ENCODE measurements at regions of chr9 and their contacts with region 1.

Region 1: GRCh38 chr9:90964101-90965020 is 162.7 kb downstream of the SYK start:
- DNase-seq: no peak
- H3K4me3 ChIP-seq: peak overlapping the region; percentile 26 to 43 (median 36)
- H3K27ac ChIP-seq: peak overlapping the region in 3 of 4 donors; percentile 39 to 81 (median 67)
- H3K4me1 ChIP-seq: peaks cover 0 to 3% (median 0%) of the 10 kb centered on the region in 4 donors
- H3K27me3 ChIP-seq: no peaks in the 10 kb centered on the region
- CTCF ChIP-seq: peak in 1 of 4 experiments; percentile 11
- EP300 ChIP-seq: no peak
- POLR2A ChIP-seq: no peak

Region 2: GRCh38 chr9:90569511-90569910 is 394.9 kb before region 1 on chr9:
- intact Hi-C with region 1: no loop called
- DNase-seq: no peak
- H3K4me3 ChIP-seq: no peak overlapping the region
- H3K27ac ChIP-seq: no peak overlapping the region
- H3K4me1 ChIP-seq: no peaks in the 10 kb centered on the region
- H3K27me3 ChIP-seq: no peaks in the 10 kb centered on the region
- CTCF ChIP-seq: no peak
- EP300 ChIP-seq: no peak
- POLR2A ChIP-seq: no peak

Region 3: DNA sequence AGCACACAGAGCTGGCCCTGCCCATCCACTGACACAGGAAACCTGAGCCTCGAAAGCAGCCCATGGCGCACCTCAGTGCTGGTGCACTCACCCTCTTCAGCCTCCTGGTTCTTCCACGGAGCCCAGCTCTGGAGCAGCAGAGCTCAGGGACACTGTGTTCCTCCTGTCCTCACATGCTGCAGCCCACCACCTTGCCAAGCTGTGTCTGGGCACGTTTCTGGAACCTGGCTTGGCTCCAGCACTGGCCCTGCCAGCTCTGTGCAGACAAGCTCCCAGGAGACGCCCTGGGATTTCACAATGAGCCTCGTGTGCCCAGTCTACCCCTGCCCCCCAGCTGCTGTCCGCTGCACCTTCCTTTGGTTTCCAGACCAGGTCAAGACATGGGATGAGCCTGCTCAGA is 43.2 kb before region 1 on chr9:
- intact Hi-C with region 1: loop called (anchors 5 kb)
- DNase-seq: peak; percentile 95
- H3K4me3 ChIP-seq: no peak overlapping the region
- H3K27ac ChIP-seq: peak overlapping the region in 2 of 4 donors; percentile 31 to 49
- H3K4me1 ChIP-seq: peaks cover 0 to 17% (median 9%) of the 10 kb centered on the region in 4 donors
- H3K27me3 ChIP-seq: no peaks in the 10 kb centered on the region
- CTCF ChIP-seq: no peak
- EP300 ChIP-seq: peak; percentile 58 to 97 (median 85)
- POLR2A ChIP-seq: no peak

Measured in sigmoid colon (tissue), 7 donors.